Caco-2 (cell line): ENCODE measurements at regions of chr20 and their contacts with region 1.

Region 1: GRCh38 chr20:9609887-9610502 is 95.6 kb downstream of the LAMP5 start:
- DNase-seq: peak; percentile 16 to 53
- H3K4me3 ChIP-seq: no peak overlapping the region
- H3K4me3 Mint-ChIP-seq: no peak overlapping the region
- H3K27ac Mint-ChIP-seq: no peak overlapping the region
- H3K4me1 ChIP-seq: no peaks in the 10 kb centered on the region
- H3K4me1 Mint-ChIP-seq: peaks cover 8% of the 10 kb centered on the region
- H3K27me3 ChIP-seq: no peaks in the 10 kb centered on the region
- H3K27me3 Mint-ChIP-seq: peaks cover 9% of the 10 kb centered on the region
- CTCF ChIP-seq: peak; percentile 58

Region 2: GRCh38 chr20:9407805-9408421 is 202.1 kb before region 1 on chr20:
- CTCF ChIA-PET with region 1: interaction called, 48 read pairs
- POLR2A ChIA-PET with region 1: no interaction called
- intact Hi-C with region 1: loop called (anchors 1 kb)
- DNase-seq: peak; percentile 66 to 76
- H3K4me3 ChIP-seq: no peak overlapping the region
- H3K4me3 Mint-ChIP-seq: no peak overlapping the region
- H3K27ac Mint-ChIP-seq: no peak overlapping the region
- H3K4me1 ChIP-seq: no peaks in the 10 kb centered on the region
- H3K4me1 Mint-ChIP-seq: no peaks in the 10 kb centered on the region
- H3K27me3 ChIP-seq: no peaks in the 10 kb centered on the region
- H3K27me3 Mint-ChIP-seq: no peaks in the 10 kb centered on the region
- CTCF ChIP-seq: peak; percentile 79 to 81

Region 3: DNA sequence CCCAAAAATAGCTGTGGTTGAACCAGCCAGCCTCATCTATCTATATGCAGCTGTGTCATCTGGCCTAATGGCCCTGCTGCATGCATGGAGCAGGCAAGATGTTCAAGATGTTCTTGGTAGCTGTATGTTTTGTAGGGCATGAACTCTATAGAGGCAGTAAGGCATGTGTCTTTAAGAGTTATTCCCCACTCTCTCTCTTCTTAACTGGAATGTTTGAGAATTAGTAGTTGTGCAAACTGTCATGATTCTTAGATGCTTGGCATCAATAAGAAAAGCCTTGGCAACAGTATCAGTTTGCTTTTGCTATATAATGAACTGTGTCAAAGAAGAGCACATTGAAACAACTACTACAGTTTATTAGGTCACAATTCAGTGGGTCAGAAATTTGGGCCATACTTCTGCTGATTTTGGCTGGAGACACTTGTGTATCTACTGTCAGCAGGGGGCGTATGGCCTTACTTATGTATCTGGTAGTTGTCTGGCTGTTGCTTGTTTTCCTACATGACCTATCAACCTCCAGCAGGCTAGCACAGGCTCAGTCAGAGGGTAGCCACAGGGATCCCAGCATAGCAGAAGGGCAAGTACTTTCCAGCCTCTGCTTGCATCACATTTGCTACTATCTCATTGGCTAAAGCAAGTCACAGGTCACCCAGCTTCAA is 151.7 kb before region 1 on chr20:
- CTCF ChIA-PET with region 1: interaction called, 14 read pairs
- POLR2A ChIA-PET with region 1: interaction called, 5 read pairs
- intact Hi-C with region 1: no loop called
- DNase-seq: peak in 1 of 2 experiments; percentile 37
- H3K4me3 ChIP-seq: no peak overlapping the region
- H3K4me3 Mint-ChIP-seq: no peak overlapping the region
- H3K27ac Mint-ChIP-seq: no peak overlapping the region
- H3K4me1 ChIP-seq: no peaks in the 10 kb centered on the region
- H3K4me1 Mint-ChIP-seq: no peaks in the 10 kb centered on the region
- H3K27me3 ChIP-seq: no peaks in the 10 kb centered on the region
- H3K27me3 Mint-ChIP-seq: no peaks in the 10 kb centered on the region
- CTCF ChIP-seq: peak in 1 of 2 experiments; percentile 41

Region 4: GRCh38 chr20:9467995-9468394 is 142.0 kb before region 1 on chr20:
- CTCF ChIA-PET with region 1: no interaction called
- POLR2A ChIA-PET with region 1: no interaction called
- intact Hi-C with region 1: loop called (anchors 1 kb)
- DNase-seq: peak in 1 of 2 experiments; percentile 5
- H3K4me3 ChIP-seq: no peak overlapping the region
- H3K4me3 Mint-ChIP-seq: no peak overlapping the region
- H3K27ac Mint-ChIP-seq: no peak overlapping the region
- H3K4me1 ChIP-seq: no peaks in the 10 kb centered on the region
- H3K4me1 Mint-ChIP-seq: no peaks in the 10 kb centered on the region
- H3K27me3 ChIP-seq: no peaks in the 10 kb centered on the region
- H3K27me3 Mint-ChIP-seq: no peaks in the 10 kb centered on the region
- CTCF ChIP-seq: peak; percentile 66 to 68

Region 5: DNA sequence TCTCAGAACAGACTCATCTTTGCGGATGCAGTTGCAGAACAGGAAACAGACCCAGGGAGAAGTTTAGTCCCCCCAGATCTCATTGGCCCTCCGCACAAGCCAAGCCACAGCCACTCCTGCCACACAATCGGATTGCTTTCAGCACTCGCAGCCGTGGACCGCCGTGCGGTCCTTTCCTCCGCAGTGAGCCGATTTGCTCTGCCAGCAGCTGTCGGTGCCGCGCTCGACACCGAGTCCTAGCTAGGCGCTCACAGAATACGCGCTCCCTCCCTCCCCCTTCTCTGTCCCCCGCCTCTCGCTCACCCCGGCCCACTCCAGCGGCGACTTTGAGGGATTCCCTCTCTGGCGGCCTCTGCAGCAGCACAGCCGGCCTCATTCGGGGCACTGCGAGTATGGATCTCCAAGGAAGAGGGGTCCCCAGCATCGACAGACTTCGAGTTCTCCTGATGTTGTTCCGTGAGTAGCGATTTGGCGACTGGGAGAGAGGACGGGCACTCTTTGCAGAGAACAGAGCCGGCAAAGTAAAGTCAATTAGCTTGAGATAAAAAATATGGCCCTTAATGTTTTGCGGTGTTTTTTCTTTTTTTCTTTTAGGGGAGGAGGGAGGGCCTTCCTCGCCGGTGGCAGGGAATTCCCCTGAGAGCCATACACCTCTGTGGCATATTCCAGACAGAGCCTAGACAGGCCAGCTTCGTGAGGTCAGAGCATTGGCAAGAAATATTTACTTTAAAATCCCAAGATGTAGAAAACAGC is 95.4 kb before region 1 on chr20 and contains the start of gene LAMP5:
- CTCF ChIA-PET with region 1: no interaction called
- POLR2A ChIA-PET with region 1: no interaction called
- intact Hi-C with region 1: loop called (anchors 5 kb)
- DNase-seq: no peak
- H3K4me3 ChIP-seq: no peak within 1 kb of the TSS
- H3K4me3 Mint-ChIP-seq: no peak within 1 kb of the TSS
- H3K27ac Mint-ChIP-seq: no peak within 1 kb of the TSS
- H3K4me1 ChIP-seq: no peaks in the 10 kb centered on the region
- H3K4me1 Mint-ChIP-seq: no peaks in the 10 kb centered on the region
- H3K27me3 ChIP-seq: no peaks in the 10 kb centered on the region
- H3K27me3 Mint-ChIP-seq: peaks cover 18% of the 10 kb centered on the region
- CTCF ChIP-seq: no peak
- total RNA-seq, gene LAMP5: not detected in 2 replicates

Region 6: DNA sequence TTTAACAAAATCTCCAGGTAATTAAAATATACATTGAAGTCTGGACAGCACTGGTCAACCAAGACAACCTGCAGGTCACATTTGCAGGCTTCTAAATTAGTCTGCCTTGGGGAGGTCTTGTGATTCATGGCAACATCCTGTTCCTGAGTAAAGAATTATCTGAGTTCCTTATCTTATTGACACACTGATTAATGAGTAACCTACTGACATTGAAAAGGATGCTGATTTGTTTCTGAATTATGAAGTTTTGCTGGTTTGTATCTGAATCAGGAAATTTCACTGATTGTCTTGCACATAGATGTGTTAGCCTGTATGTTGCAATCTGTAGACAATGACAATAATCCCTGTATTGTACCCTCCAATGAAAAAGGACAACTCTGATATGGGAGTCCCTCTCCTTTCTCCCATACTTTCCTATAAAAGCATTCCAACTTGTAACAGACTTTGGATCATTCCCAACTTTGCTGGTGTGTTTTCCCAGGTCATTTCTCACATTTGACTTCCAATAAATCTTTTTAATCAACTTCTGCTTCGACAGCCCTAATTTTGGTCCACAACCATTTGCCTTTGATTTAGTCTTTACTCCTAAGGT is 15.6 kb before region 1 on chr20:
- CTCF ChIA-PET with region 1: no interaction called
- POLR2A ChIA-PET with region 1: no interaction called
- intact Hi-C with region 1: no loop called
- DNase-seq: no peak
- H3K4me3 ChIP-seq: no peak overlapping the region
- H3K4me3 Mint-ChIP-seq: no peak overlapping the region
- H3K27ac Mint-ChIP-seq: no peak overlapping the region
- H3K4me1 ChIP-seq: peaks cover 6% of the 10 kb centered on the region; the same call in 1 of the 2 replicates
- H3K4me1 Mint-ChIP-seq: no peaks in the 10 kb centered on the region
- H3K27me3 ChIP-seq: no peaks in the 10 kb centered on the region; the same call in 1 of the 2 replicates
- H3K27me3 Mint-ChIP-seq: no peaks in the 10 kb centered on the region
- CTCF ChIP-seq: no peak